Dorsolateral prefrontal cortex (tissue), 120 donors: ENCODE measurements at regions of chr9 and their contacts with region 1.

Region 1: GRCh38 chr9:95726756-95727155 is 148.7 kb upstream of the ERCC6L2 start:
- DNase-seq: no peak
- H3K4me3 ChIP-seq: no peak overlapping the region
- H3K27ac ChIP-seq: no peak overlapping the region
- H3K27me3 ChIP-seq: peaks cover 0 to 13% (median 0%) of the 10 kb centered on the region in 45 donors
- CTCF ChIP-seq: peak; percentile 42 to 82 (median 72)

Region 2: GRCh38 chr9:95772320-95773052 is 45.7 kb after region 1 on chr9:
- intact Hi-C with region 1: no loop called
- DNase-seq: peak in 2 of 10 donors; percentile 45 to 52
- H3K4me3 ChIP-seq: peak overlapping the region in 3 of 59 donors; percentile 15 to 52 (median 44)
- H3K27ac ChIP-seq: peak overlapping the region in 30 of 59 donors; percentile 1 to 76 (median 40)
- H3K27me3 ChIP-seq: peaks cover 0 to 5% (median 0%) of the 10 kb centered on the region in 45 donors
- CTCF ChIP-seq: no peak

Region 3: DNA sequence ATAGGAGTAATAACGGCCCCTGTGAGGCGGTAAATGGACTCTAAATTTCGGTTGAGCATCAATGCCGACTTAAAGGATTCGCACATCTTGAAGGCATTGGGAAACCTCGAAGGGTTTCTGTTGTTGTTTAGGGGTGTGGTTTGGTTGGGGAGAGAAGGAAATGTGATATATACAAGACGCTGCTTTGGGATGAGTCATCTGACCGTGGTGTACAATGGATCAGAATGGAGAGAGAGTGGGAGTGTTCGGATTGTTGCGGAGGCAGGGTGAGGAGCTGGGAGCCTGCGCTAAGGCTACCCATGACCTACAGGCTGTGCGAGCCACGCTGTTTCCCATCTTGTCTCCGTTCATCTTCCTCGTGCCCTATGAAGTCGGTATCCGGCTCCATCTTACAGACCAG is 88.4 kb after region 1 on chr9:
- intact Hi-C with region 1: no loop called
- DNase-seq: no peak
- H3K4me3 ChIP-seq: no peak overlapping the region
- H3K27ac ChIP-seq: no peak overlapping the region
- H3K27me3 ChIP-seq: no peaks in the 10 kb centered on the region
- CTCF ChIP-seq: no peak

Region 4: GRCh38 chr9:96109680-96110351 is 383.1 kb after region 1 on chr9:
- intact Hi-C with region 1: loop called in 1 of 2 experiments (anchors 5 kb)
- DNase-seq: no peak
- H3K4me3 ChIP-seq: no peak overlapping the region
- H3K27ac ChIP-seq: no peak overlapping the region
- H3K27me3 ChIP-seq: no peaks in the 10 kb centered on the region
- CTCF ChIP-seq: no peak

Region 5: DNA sequence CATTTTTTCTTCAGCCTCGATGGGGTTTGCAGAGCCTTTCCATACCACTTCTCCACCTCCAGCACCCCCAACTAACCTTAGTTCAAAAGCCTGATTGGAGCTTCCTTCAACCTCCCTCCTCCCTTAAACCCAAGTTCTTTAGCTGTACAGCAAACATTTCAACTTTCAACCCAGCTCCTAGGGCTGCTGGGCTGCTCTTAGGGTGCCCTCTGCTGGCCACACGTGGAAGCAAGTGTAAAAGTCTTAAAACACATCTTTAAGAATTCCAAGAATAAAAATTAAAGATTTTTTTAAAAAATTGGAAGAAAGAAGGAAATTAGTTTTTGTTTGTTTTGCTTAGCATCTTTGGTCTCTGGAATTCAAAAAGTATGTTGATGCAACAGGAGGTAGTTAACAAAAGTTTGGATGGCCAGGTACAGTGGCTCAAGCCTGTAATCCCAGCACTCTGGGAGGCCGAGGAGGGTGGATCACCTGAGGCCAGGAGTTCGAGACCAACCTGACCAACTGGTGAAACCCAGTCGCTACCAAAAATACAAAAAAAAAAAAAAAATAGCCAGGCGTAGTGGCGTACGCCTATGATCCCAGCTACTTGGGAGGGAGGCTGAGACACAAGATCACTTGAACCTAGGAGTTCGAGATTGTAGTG is 590.7 kb after region 1 on chr9:
- intact Hi-C with region 1: loop called in 1 of 2 experiments (anchors 10 kb)
- DNase-seq: peak in 8 of 10 donors; percentile 20 to 80 (median 64)
- H3K4me3 ChIP-seq: no peak overlapping the region
- H3K27ac ChIP-seq: no peak overlapping the region
- H3K27me3 ChIP-seq: no peaks in the 10 kb centered on the region
- CTCF ChIP-seq: peak; percentile 67 to 95 (median 82)